Tibial artery (tissue), 4 donors: ENCODE measurements at regions of chr1 and their contacts with region 1.

Region 1: GRCh38 chr1:58791106-58791505 is 7.3 kb upstream of the JUN start:
- DNase-seq: no peak
- H3K4me3 ChIP-seq: no peak overlapping the region
- H3K27ac ChIP-seq: no peak overlapping the region
- H3K4me1 ChIP-seq: peaks cover 0 to 5% (median 3%) of the 10 kb centered on the region in 4 donors
- H3K27me3 ChIP-seq: no peaks in the 10 kb centered on the region
- CTCF ChIP-seq: no peak

Region 2: GRCh38 chr1:59076612-59077011 is 285.5 kb after region 1 on chr1:
- intact Hi-C with region 1: loop called (anchors 10 kb)
- DNase-seq: no peak
- H3K4me3 ChIP-seq: no peak overlapping the region
- H3K27ac ChIP-seq: no peak overlapping the region
- H3K4me1 ChIP-seq: no peaks in the 10 kb centered on the region
- H3K27me3 ChIP-seq: no peaks in the 10 kb centered on the region
- CTCF ChIP-seq: peak; percentile 41 to 47